Ovary (tissue), 10 donors: ENCODE measurements at regions of chr9 and their contacts with region 1.

Region 1: GRCh38 chr9:30310711-30311110 is 2073.7 kb upstream of the ACO1 start:
- DNase-seq: no peak
- H3K4me3 ChIP-seq: no peak overlapping the region
- H3K27ac ChIP-seq: no peak overlapping the region
- H3K4me1 ChIP-seq: no peaks in the 10 kb centered on the region
- H3K27me3 ChIP-seq: no peaks in the 10 kb centered on the region
- CTCF ChIP-seq: no peak
- EP300 ChIP-seq: no peak
- POLR2A ChIP-seq: no peak

Region 2: GRCh38 chr9:30280229-30280900 is 30.3 kb before region 1 on chr9:
- intact Hi-C with region 1: loop called in 1 of 4 experiments (anchors 5 kb)
- DNase-seq: no peak
- H3K4me3 ChIP-seq: no peak overlapping the region
- H3K27ac ChIP-seq: no peak overlapping the region
- H3K4me1 ChIP-seq: no peaks in the 10 kb centered on the region
- H3K27me3 ChIP-seq: no peaks in the 10 kb centered on the region
- CTCF ChIP-seq: no peak
- EP300 ChIP-seq: no peak
- POLR2A ChIP-seq: no peak